ENCODE measurements at regions of chr16 and their contacts with region 1.

Region 1: DNA sequence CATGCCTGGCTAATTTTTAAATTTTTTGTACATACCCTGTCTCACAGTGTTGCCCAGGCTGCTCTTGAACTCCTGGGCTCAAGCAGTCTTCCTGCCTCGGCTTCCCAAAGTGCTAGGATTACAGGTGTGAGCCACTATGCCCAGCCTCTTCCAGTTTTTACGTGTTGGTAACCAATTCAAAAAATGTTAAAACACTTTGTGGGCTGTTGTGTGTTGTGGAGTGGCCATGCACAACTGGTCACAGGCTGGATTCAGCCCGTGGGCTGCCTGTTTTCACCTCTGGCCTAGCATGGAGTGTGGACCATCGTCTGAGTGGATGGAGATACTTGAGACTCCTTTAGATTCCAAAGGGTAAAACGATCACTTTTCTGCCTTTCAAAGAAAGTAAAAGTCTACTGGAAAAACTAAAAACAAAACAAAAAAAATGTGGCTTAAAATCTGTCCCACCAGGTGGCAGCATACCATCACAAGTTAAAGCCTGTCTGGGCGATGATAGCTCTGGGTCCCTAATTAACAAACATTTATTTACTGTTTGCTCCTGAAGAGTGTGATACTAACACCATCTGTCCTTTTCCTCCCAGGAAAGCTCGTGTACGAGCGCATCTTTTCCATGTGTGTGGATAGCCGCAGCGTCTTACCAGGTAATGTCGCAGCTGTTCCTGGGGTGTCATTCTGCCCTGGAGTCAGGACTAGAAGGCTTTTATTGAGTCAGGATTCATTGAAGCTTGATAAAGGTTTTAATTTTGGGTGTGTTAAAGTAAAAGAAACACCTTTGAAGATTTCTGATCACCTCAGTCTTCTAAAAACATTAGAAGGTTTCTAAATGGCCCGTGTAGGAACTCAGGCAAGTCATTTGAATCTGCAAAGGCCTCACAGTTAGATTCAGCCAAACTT is 45.8 kb downstream of the VPS35L start:
- DNase-seq: peak in 1 of 2 experiments; percentile 50
- H3K4me3 ChIP-seq: no peak overlapping the region
- H3K4me3 Mint-ChIP-seq: no peak overlapping the region
- H3K27ac Mint-ChIP-seq: no peak overlapping the region
- H3K4me1 ChIP-seq: peaks cover 6% of the 10 kb centered on the region; the same call in 1 of the 2 replicates
- H3K4me1 Mint-ChIP-seq: no peaks in the 10 kb centered on the region
- H3K27me3 ChIP-seq: no peaks in the 10 kb centered on the region
- H3K27me3 Mint-ChIP-seq: no peaks in the 10 kb centered on the region
- CTCF ChIP-seq: peak; percentile 52 to 77

Region 2: GRCh38 chr16:19114352-19115052 is 486.8 kb before region 1 on chr16:
- CTCF ChIA-PET with region 1: no interaction called
- POLR2A ChIA-PET with region 1: no interaction called
- intact Hi-C with region 1: no loop called
- DNase-seq: peak; percentile 48 to 51
- H3K4me3 ChIP-seq: peak overlapping the region; percentile 78
- H3K4me3 Mint-ChIP-seq: peak overlapping the region; percentile 87
- H3K27ac Mint-ChIP-seq: peak overlapping the region; percentile 91
- H3K4me1 ChIP-seq: peaks cover 28% of the 10 kb centered on the region
- H3K4me1 Mint-ChIP-seq: peaks cover 7% of the 10 kb centered on the region
- H3K27me3 ChIP-seq: no peaks in the 10 kb centered on the region
- H3K27me3 Mint-ChIP-seq: no peaks in the 10 kb centered on the region
- CTCF ChIP-seq: no peak

Region 3: GRCh38 chr16:19559247-19559910 is 42.0 kb before region 1 on chr16:
- CTCF ChIA-PET with region 1: no interaction called
- POLR2A ChIA-PET with region 1: no interaction called
- intact Hi-C with region 1: loop called (anchors 2 kb)
- DNase-seq: peak in 1 of 2 experiments; percentile 35
- H3K4me3 ChIP-seq: no peak overlapping the region
- H3K4me3 Mint-ChIP-seq: no peak overlapping the region
- H3K27ac Mint-ChIP-seq: no peak overlapping the region
- H3K4me1 ChIP-seq: no peaks in the 10 kb centered on the region
- H3K4me1 Mint-ChIP-seq: no peaks in the 10 kb centered on the region
- H3K27me3 ChIP-seq: no peaks in the 10 kb centered on the region
- H3K27me3 Mint-ChIP-seq: no peaks in the 10 kb centered on the region
- CTCF ChIP-seq: peak; percentile 35 to 47

Region 4: GRCh38 chr16:19753815-19754643 is 152.7 kb after region 1 on chr16:
- CTCF ChIA-PET with region 1: interaction called, 7 read pairs
- POLR2A ChIA-PET with region 1: no interaction called
- intact Hi-C with region 1: loop called (anchors 1 kb)
- DNase-seq: peak in 1 of 2 experiments; percentile 5
- H3K4me3 ChIP-seq: no peak overlapping the region
- H3K4me3 Mint-ChIP-seq: peak overlapping the region; percentile 43
- H3K27ac Mint-ChIP-seq: peak overlapping the region; percentile 73
- H3K4me1 ChIP-seq: peaks cover 41% of the 10 kb centered on the region
- H3K4me1 Mint-ChIP-seq: peaks cover 7% of the 10 kb centered on the region
- H3K27me3 ChIP-seq: no peaks in the 10 kb centered on the region
- H3K27me3 Mint-ChIP-seq: no peaks in the 10 kb centered on the region
- CTCF ChIP-seq: no peak